ENCODE measurements at regions of chr1 and their contacts with region 1.

Region 1: DNA sequence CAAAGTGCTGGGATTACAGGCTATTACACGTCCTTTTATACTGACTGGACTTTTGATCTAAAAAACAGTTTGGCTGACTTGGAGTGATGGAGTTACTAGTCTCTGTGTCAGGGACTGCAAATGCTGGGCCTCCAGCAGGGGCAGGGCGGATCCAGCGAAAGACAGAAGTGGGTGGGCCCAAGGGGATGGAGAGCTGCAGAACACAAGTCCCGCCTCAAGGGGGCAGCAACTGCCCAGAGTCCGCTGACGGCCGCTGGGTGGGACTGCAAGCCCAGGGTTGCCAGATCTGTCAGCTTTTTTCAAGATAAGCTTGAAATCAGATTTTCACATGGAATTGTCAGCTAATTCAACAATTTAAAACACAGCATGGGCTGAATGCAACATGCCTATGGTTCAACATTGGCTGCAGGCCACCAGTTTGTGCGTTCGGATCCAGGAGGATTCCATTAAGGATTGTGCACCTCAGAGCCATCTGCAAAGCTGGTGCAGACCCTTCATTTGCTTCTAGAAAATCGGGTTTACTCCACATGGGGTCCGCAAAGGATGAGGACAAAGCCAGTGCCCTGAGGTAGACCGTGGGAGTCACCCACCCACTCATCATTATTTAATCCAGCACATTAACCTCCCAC is 10.7 kb downstream of the STMN1 start:
- ATAC-seq: peak; percentile 68 to 90 (median 87)
- H3K4me3 ChIP-seq: no peak overlapping the region
- H3K27ac ChIP-seq: peak overlapping the region in 1 of 2 donors; percentile 31
- H3K4me1 ChIP-seq: peaks cover 35 to 45% of the 10 kb centered on the region in 2 donors

Region 2: GRCh38 chr1:25743826-25744581 is 151.5 kb before region 1 on chr1:
- in situ Hi-C with region 1: no loop called
- ATAC-seq: peak; percentile 70 to 95 (median 78)
- H3K4me3 ChIP-seq: no peak overlapping the region
- H3K27ac ChIP-seq: no peak overlapping the region
- H3K4me1 ChIP-seq: peaks cover 18 to 22% of the 10 kb centered on the region in 2 donors

Region 3: GRCh38 chr1:25754470-25755181 is 140.9 kb before region 1 on chr1:
- in situ Hi-C with region 1: no loop called
- ATAC-seq: peak; percentile 41 to 80 (median 52)
- H3K4me3 ChIP-seq: no peak overlapping the region
- H3K27ac ChIP-seq: no peak overlapping the region
- H3K4me1 ChIP-seq: peaks cover 4 to 9% of the 10 kb centered on the region in 2 donors

Region 4: GRCh38 chr1:25771246-25772114 is 124.0 kb before region 1 on chr1:
- in situ Hi-C with region 1: no loop called
- ATAC-seq: peak in 6 of 8 experiments; percentile 35 to 95 (median 92)
- H3K4me3 ChIP-seq: peak overlapping the region in 2 of 5 donors; percentile 3 to 16
- H3K27ac ChIP-seq: peak overlapping the region in 1 of 2 donors; percentile 24
- H3K4me1 ChIP-seq: peaks cover 29 to 33% of the 10 kb centered on the region in 2 donors

Region 5: GRCh38 chr1:25989440-25990234 is 94.2 kb after region 1 on chr1:
- in situ Hi-C with region 1: loop called in 4 of 9 experiments (anchors 10 to 25 kb)
- ATAC-seq: peak in 1 of 8 experiments; percentile 48
- H3K4me3 ChIP-seq: no peak overlapping the region
- H3K27ac ChIP-seq: peak overlapping the region; percentile 51 to 77
- H3K4me1 ChIP-seq: peaks cover 20 to 23% of the 10 kb centered on the region in 2 donors

Region 6: GRCh38 chr1:25997828-25998761 is 102.6 kb after region 1 on chr1 and contains the start of gene PAFAH2:
- in situ Hi-C with region 1: loop called in 6 of 9 experiments (anchors 5 to 25 kb)
- ATAC-seq: peak; percentile 98 to 99 (median 98)
- H3K4me3 ChIP-seq: peak within 1 kb of the TSS; percentile 43 to 54 (median 50)
- H3K27ac ChIP-seq: peak within 1 kb of the TSS; percentile 44 to 70
- H3K4me1 ChIP-seq: peaks cover 20 to 22% of the 10 kb centered on the region in 2 donors
- total RNA-seq, gene PAFAH2: 6.0 to 11.8 (median 8.9) TPM

Region 7: DNA sequence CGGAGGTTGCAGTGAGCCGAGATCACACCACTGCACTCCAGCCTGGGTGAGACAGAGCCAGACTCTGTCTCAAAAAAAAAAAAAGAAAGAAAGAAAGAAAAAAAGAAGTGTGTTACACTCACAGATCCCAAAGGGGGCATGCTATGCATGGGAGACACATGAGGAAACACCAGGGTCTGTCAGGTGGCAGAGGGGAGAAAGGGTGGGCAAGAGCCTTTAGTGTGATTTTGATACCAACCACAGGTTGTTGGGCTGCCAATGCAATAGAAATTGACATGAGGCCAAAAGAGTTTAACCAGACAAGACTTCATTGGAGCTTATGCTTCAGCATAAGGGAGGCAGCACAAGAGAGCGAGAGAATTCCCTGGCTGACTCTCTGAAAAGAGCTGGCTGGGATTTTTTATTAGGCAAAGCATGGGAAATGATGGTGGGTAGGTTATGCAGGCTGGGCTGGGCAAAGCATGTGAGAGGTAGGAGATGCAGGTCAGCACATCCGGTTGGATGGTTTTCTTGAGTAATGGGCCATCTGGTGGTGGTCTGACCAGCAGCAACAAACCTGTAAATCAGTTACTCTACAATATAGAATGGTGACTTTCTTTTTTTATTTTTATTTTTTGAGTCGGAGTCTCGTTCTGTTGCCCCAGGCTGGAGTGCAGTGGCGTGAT is 114.4 kb after region 1 on chr1:
- in situ Hi-C with region 1: loop called in 2 of 9 experiments (anchors 10 kb)
- ATAC-seq: peak in 5 of 8 experiments; percentile 30 to 68 (median 41)
- H3K4me3 ChIP-seq: no peak overlapping the region
- H3K27ac ChIP-seq: no peak overlapping the region
- H3K4me1 ChIP-seq: peaks cover 0 to 5% of the 10 kb centered on the region in 2 donors